Activated CD4-positive, alpha-beta memory T cell treated with anti-CD3 and anti-CD28 coated beads, Interleukin-2, amount 10 ng/mL, durations not matched to agents 7 days and 5 days (primary cell): ENCODE measurements at regions of chr10 and their contacts with region 1.

Region 1: GRCh38 chr10:26725837-26726727 is 28.6 kb downstream of the PDSS1 start:
- DNase-seq: peak; percentile 60
- H3K4me3 Mint-ChIP-seq: no peak overlapping the region
- H3K27ac Mint-ChIP-seq: no peak overlapping the region
- H3K4me1 Mint-ChIP-seq: peaks cover 22% of the 10 kb centered on the region
- H3K27me3 Mint-ChIP-seq: no peaks in the 10 kb centered on the region

Region 2: DNA sequence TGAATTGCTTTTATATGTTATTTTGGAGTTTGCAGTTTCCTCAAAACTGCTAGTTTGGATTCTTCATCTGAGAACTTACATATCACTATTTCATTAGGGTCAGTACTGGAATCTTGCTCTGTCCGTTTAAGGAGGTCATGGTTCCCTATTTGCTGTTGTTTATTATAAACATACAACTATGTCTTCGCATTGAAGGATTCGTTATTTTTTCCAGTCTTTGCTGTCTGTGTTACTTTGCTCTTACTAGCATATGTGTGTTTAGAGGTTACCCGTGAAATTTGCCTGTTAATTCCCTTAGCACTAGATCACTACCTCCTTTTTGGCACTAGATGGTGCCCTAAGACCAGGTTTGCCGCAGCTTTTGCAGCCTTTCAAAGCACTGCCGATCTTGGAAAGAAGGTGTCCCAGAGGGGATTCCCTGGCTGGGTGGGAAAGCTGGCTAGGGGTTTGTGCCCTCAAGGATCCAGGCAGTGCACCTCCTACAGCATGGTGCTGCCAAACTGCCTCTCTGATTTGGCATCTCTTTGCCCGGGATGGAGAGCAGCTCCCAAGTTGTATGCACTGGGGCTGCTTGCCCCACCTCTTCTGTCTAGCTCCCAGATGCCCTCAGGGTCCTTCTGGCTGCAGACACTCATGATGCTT is 391.0 kb before region 1 on chr10:
- CTCF ChIA-PET with region 1: interaction called, 12 read pairs
- POLR2A ChIA-PET with region 1: no interaction called
- DNase-seq: peak; percentile 68
- H3K4me3 Mint-ChIP-seq: peak overlapping the region; percentile 69
- H3K27ac Mint-ChIP-seq: peak overlapping the region; percentile 61
- H3K4me1 Mint-ChIP-seq: peaks cover 10% of the 10 kb centered on the region
- H3K27me3 Mint-ChIP-seq: peaks cover 5% of the 10 kb centered on the region

Region 3: GRCh38 chr10:26650406-26650805 is 75.7 kb before region 1 on chr10:
- CTCF ChIA-PET with region 1: no interaction called
- POLR2A ChIA-PET with region 1: no interaction called
- DNase-seq: no peak
- H3K4me3 Mint-ChIP-seq: no peak overlapping the region
- H3K27ac Mint-ChIP-seq: no peak overlapping the region
- H3K4me1 Mint-ChIP-seq: no peaks in the 10 kb centered on the region
- H3K27me3 Mint-ChIP-seq: peaks cover 11% of the 10 kb centered on the region

Region 4: DNA sequence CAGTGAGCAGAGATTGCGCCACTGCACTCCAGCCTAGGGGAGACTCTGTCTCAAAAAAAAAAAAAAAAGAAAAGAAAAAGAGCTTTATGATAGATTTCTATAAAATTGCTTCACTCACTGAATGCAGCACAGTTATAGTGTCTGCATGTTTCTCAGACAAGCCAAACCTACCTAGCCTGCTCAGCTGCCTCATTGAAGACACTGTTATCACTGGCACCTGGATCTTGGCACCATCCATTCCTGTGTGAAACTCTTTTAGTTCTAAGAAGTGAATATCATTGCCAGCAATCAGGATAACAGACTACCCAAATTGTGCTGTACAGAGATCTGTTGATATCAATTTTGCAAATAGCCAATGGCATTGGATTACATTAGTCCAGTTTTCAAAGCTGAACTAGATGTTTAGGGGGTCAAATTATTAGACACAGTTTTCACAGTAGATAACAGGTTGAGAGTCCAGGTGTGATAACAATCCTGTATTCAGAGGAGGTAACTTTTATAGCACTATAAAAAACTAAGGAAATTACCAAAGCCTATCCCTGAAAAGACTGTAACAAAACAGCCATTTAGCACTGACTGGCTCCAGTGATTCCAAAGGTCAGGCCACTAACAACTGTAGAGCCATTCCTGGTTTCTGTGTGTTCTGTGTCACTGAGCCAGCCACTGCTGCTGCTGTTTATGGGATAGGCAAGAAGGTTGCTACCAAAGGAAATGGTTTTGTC is 11.5 kb before region 1 on chr10:
- CTCF ChIA-PET with region 1: interaction called, 13 read pairs
- POLR2A ChIA-PET with region 1: interaction called, 3 read pairs
- DNase-seq: no peak
- H3K4me3 Mint-ChIP-seq: no peak overlapping the region
- H3K27ac Mint-ChIP-seq: no peak overlapping the region
- H3K4me1 Mint-ChIP-seq: peaks cover 7% of the 10 kb centered on the region
- H3K27me3 Mint-ChIP-seq: no peaks in the 10 kb centered on the region

Region 5: GRCh38 chr10:26755443-26755903 is 29.4 kb after region 1 on chr10:
- CTCF ChIA-PET with region 1: interaction called, 18 read pairs
- POLR2A ChIA-PET with region 1: interaction called, 3 read pairs
- DNase-seq: no peak
- H3K4me3 Mint-ChIP-seq: no peak overlapping the region
- H3K27ac Mint-ChIP-seq: peak overlapping the region; percentile 1
- H3K4me1 Mint-ChIP-seq: peaks cover 20% of the 10 kb centered on the region
- H3K27me3 Mint-ChIP-seq: no peaks in the 10 kb centered on the region

Region 6: GRCh38 chr10:26869528-26869927 is 143.4 kb after region 1 on chr10:
- CTCF ChIA-PET with region 1: interaction called, 20 read pairs
- POLR2A ChIA-PET with region 1: no interaction called
- DNase-seq: no peak
- H3K4me3 Mint-ChIP-seq: no peak overlapping the region
- H3K27ac Mint-ChIP-seq: peak overlapping the region; percentile 22
- H3K4me1 Mint-ChIP-seq: peaks cover 8% of the 10 kb centered on the region
- H3K27me3 Mint-ChIP-seq: peaks cover 16% of the 10 kb centered on the region